Esophagus muscularis mucosa (tissue), 4 donors: ENCODE measurements at regions of chr12 and their contacts with region 1.

Region 1: GRCh38 chr12:7797698-7798398 is 8.6 kb downstream of the NANOG start:
- DNase-seq: no peak
- H3K4me3 ChIP-seq: no peak overlapping the region
- H3K27ac ChIP-seq: no peak overlapping the region
- H3K4me1 ChIP-seq: no peaks in the 10 kb centered on the region
- H3K27me3 ChIP-seq: no peaks in the 10 kb centered on the region
- CTCF ChIP-seq: no peak
- EP300 ChIP-seq: no peak
- POLR2A ChIP-seq: no peak

Region 2: DNA sequence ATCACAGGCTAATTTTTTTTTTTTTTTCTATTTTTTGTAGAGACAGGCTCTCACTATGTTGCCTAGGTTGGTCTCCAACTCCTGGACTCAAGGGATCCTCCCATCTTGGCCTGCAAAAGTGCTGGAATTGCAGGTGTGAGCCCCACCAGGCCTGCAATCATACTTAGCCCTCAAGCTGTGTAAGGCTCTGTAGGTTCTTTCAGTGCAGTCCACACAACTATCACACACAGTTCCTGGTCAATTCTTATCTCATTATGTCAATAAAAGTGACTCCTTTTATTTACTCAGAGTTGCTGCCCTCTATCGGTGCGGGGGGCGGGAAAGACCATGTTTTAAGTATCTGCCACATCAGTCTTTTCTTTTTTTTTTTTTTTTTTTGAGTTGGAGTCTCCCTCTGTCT is 109.2 kb after region 1 on chr12:
- intact Hi-C with region 1: loop called (anchors 5 kb)
- DNase-seq: no peak
- H3K4me3 ChIP-seq: no peak overlapping the region
- H3K27ac ChIP-seq: no peak overlapping the region
- H3K4me1 ChIP-seq: no peaks in the 10 kb centered on the region
- H3K27me3 ChIP-seq: no peaks in the 10 kb centered on the region
- CTCF ChIP-seq: no peak
- EP300 ChIP-seq: no peak
- POLR2A ChIP-seq: no peak